ENCODE measurements at regions of chr4 and their contacts with region 1.

Region 1: GRCh38 chr4:169810325-169811323 is 52.9 kb upstream of the HPF1 start:
- DNase-seq: peak in 1 of 2 donors; percentile 63
- H3K4me3 ChIP-seq: no peak overlapping the region
- CTCF ChIP-seq: peak in 1 of 3 donors; percentile 42
- POLR2A ChIP-seq: no peak

Region 2: DNA sequence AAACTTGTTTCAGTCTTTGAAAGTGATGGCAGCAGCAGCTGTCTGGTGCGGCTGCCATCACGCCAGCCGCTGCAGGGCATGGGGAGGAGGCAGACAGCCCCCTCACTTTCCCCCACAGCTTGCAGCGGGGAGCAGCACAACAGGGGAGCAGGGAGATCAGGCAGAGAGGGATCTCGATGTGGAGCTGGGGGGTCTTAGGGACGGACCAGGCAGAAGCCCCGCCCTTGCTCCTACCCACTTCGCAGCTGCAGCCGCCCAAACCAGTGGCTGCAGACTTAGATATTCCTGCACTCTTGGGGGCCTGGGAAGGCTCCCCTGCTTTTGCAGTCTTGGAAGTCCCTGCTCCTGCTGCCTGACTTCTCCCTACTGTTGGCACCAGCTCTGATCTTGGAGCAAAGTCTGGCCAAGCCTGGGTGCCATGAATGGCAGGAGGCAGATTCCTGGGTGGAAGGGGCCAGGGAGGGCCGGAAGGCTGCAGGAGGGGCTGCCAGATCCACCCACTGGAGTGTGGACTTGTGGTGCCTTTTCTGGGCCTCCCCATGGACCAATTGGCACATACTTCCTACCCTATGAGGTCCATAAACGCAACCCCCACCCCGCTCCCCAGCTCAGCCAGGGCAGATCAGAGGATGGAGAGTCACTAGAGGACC is 229.5 kb after region 1 on chr4:
- intact Hi-C with region 1: loop called (anchors 5 kb)
- DNase-seq: no peak
- H3K4me3 ChIP-seq: no peak overlapping the region
- CTCF ChIP-seq: no peak
- POLR2A ChIP-seq: no peak

Measured in lower leg skin (tissue), 4 donors.